PC-9 (cell line): ENCODE measurements at regions of chr16 and their contacts with region 1.

Region 1: DNA sequence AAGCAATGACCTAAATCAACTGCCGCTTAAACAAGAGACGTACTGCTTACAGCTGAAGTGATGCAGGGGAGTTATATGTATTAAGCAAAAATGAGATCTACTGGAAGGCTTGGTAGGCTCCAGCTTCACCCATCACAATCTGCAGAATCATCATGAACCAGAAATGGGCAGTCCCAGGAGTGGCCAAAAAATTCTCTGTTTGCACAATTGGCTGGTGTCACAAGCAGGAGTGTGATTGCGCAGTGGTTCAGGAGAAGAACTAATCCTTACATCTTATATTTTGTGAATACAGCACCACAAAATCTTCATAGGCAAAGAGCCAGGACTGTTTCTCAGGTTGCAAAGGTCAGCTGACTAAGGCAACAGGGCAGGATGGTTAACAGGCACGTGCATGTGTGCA is 75.9 kb downstream of the CES1 start:
- DNase-seq: no peak
- H3K4me3 ChIP-seq: no peak overlapping the region
- H3K27ac ChIP-seq: no peak overlapping the region
- H3K4me1 ChIP-seq: no peaks in the 10 kb centered on the region
- H3K27me3 ChIP-seq: no peaks in the 10 kb centered on the region
- CTCF ChIP-seq: no peak

Region 2: GRCh38 chr16:55832758-55833540 is 76.0 kb after region 1 on chr16 and contains the start of gene CES1:
- CTCF ChIA-PET with region 1: no interaction called
- POLR2A ChIA-PET with region 1: no interaction called
- intact Hi-C with region 1: loop called (anchors 10 kb)
- DNase-seq: peak in 1 of 2 experiments; percentile 72
- H3K4me3 ChIP-seq: no peak within 1 kb of the TSS
- H3K27ac ChIP-seq: no peak within 1 kb of the TSS
- H3K4me1 ChIP-seq: peaks cover 35% of the 10 kb centered on the region
- H3K27me3 ChIP-seq: no peaks in the 10 kb centered on the region
- CTCF ChIP-seq: no peak
- total RNA-seq, gene CES1: 107 and 141 TPM in 2 replicates